Psoas muscle (tissue), 8 donors: ENCODE measurements at regions of chr6 and their contacts with region 1.

Region 1: DNA sequence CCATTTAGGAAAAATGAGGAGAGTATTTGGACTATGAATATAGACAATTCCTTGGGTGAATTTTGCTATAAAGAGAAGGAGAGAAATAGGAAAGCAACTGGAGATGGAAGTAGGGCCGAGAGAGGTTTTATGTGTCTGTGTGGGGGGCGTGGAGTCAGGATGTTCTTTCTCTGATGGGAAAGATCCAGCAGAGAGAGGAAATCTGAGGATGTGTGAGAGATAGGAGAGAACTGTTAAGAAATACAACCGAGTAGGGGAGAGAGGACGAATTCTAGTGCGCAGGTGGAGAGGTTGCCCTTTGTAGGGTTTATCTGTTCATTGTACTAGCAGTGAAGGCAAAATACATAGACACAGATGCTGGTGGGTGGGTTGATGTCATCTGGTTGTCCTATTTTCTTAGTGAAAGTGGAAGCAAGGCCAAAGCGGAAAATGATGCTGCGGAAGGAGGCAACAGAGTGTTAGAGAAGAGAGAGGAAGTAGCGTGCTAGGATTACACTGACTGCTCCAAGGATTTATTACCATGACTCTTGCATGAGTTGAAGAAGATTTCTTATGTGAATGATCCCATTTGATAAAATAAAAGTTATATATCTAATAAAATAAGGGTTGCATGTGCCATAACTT is 57.7 kb downstream of the CLVS2 start:
- DNase-seq: no peak
- ATAC-seq: peak in 1 of 4 donors; percentile 59
- H3K4me3 ChIP-seq: no peak overlapping the region
- H3K27ac ChIP-seq: no peak overlapping the region
- H3K4me1 ChIP-seq: no peaks in the 10 kb centered on the region
- H3K27me3 ChIP-seq: no peaks in the 10 kb centered on the region
- CTCF ChIP-seq: no peak

Region 2: DNA sequence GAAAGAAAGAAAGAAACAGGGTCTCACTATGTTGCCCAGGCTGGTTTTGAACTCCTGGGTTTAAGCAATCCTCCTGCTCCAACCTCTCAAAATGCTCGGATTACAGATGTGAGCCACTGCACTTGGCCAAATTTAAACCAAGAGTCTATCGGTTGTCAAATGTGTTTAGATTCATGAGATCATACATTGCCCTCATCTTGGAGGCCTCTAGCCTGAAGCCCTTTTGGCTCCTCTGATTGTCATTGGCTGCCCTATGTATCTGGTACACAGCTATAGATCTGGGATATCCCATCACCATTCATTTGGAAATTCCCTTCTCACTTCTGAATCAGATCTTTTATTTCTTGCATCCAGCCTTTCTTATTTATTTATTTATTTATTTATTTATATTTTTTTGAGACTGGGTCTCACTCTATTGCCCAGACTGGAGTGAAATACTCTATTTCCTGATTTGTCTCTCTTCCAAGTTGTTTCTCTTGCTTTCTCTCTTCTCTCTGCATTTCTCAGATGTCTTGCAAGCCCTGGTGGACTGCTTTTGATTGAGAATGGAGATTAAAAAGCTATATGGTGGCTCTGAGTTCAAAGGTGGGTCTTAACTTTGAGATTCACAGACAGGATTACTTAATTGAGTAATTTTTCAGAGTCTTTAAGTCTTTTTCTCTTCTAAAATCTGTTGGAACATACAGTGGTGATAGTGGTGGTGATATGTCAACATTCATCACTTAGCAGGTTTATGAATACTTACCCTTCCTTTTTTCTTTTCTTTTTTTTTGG is 1496.4 kb before region 1 on chr6:
- intact Hi-C with region 1: loop called in 1 of 2 experiments (anchors 5 kb)
- DNase-seq: no peak
- ATAC-seq: no peak
- H3K4me3 ChIP-seq: no peak overlapping the region
- H3K27ac ChIP-seq: no peak overlapping the region
- H3K4me1 ChIP-seq: no peaks in the 10 kb centered on the region
- H3K27me3 ChIP-seq: no peaks in the 10 kb centered on the region
- CTCF ChIP-seq: no peak

Region 3: GRCh38 chr6:123064038-123064437 is 10.3 kb after region 1 on chr6:
- intact Hi-C with region 1: loop called in 1 of 2 experiments (anchors 1 kb)
- DNase-seq: no peak
- ATAC-seq: no peak
- H3K4me3 ChIP-seq: no peak overlapping the region
- H3K27ac ChIP-seq: no peak overlapping the region
- H3K4me1 ChIP-seq: no peaks in the 10 kb centered on the region
- H3K27me3 ChIP-seq: no peaks in the 10 kb centered on the region
- CTCF ChIP-seq: no peak

Region 4: GRCh38 chr6:123091091-123091895 is 37.6 kb after region 1 on chr6:
- intact Hi-C with region 1: no loop called
- DNase-seq: peak; percentile 15 to 50
- ATAC-seq: peak; percentile 91 to 96 (median 96)
- H3K4me3 ChIP-seq: peak overlapping the region; percentile 35
- H3K27ac ChIP-seq: peak overlapping the region; percentile 84
- H3K4me1 ChIP-seq: peaks cover 17% of the 10 kb centered on the region
- H3K27me3 ChIP-seq: no peaks in the 10 kb centered on the region
- CTCF ChIP-seq: no peak